ENCODE measurements at regions of chr12 and their contacts with region 1.

Region 1: GRCh38 chr12:66279123-66279712 is 23.1 kb upstream of the HELB start:
- DNase-seq: no peak
- ATAC-seq: peak in 2 of 4 donors; percentile 40 to 61
- H3K4me3 ChIP-seq: no peak overlapping the region
- H3K27ac ChIP-seq: no peak overlapping the region
- H3K4me1 ChIP-seq: no peaks in the 10 kb centered on the region
- H3K27me3 ChIP-seq: no peaks in the 10 kb centered on the region
- CTCF ChIP-seq: peak in 2 of 4 donors; percentile 24 to 35

Region 2: GRCh38 chr12:65962921-65963861 is 316.0 kb before region 1 on chr12:
- intact Hi-C with region 1: no loop called
- DNase-seq: no peak
- ATAC-seq: peak in 3 of 4 donors; percentile 13 to 63 (median 35)
- H3K4me3 ChIP-seq: no peak overlapping the region
- H3K27ac ChIP-seq: no peak overlapping the region
- H3K4me1 ChIP-seq: peaks cover 0 to 7% (median 0%) of the 10 kb centered on the region in 3 donors
- H3K27me3 ChIP-seq: no peaks in the 10 kb centered on the region
- CTCF ChIP-seq: no peak

Region 3: GRCh38 chr12:66409195-66409871 is 130.1 kb after region 1 on chr12:
- intact Hi-C with region 1: loop called in 1 of 3 experiments (anchors 5 kb)
- DNase-seq: peak in 1 of 6 donors; percentile 16
- ATAC-seq: peak in 3 of 4 donors; percentile 59 to 65 (median 60)
- H3K4me3 ChIP-seq: no peak overlapping the region
- H3K27ac ChIP-seq: no peak overlapping the region
- H3K4me1 ChIP-seq: no peaks in the 10 kb centered on the region
- H3K27me3 ChIP-seq: no peaks in the 10 kb centered on the region
- CTCF ChIP-seq: peak in 3 of 4 donors; percentile 46 to 51 (median 47)